Activated CD4-positive, alpha-beta T cell treated with anti-CD3 and anti-CD28 coated beads, Interleukin-2, amount 10 ng/mL, durations not matched to agents 24 days and 14 days (primary cell): ENCODE measurements at regions of chr2 and their contacts with region 1.

Region 1: DNA sequence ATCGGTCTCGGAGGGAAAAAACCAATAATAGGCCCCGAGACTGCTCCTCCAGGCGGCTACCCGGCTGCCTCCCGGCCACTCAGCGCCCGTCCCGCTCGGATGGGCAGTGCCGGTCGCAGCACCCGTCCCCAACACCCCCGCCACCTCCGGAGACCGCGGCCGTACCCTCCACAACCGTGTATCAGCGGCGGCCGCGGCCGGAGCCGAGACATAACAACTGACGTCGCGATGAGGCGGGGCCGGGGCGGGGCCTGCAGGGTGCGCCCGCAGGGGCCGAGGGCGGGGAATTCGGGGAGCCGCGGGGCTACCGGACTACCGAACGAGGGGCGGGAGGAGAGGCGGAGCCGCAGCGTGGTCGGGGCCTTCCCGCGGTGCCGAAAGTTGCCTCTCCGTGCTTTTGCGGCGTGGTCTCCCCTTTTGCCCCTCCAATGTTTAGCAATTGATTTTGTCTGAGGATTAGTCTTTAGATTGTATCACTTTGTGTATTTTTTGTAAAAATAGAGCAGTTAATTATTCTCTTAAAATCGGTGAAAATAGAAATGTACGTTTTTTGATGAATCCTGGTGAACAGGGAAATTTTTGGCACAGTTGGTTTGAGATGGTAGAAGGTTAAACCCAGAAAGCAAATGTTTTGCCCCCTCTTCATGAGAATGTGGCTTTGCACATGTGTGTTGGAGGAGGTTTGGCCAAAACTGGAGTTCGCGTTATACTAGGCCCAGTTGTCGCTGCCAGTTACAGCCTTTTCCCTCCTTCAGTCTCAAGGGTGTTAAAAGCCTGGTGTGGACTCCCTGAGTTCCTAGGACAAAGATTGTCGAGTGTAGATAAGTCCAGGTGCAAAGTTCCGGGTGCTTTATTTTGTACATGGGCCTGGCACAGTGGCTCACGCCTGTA is at the start of gene RNF103:
- DNase-seq: peak; percentile 98
- H3K4me3 Mint-ChIP-seq: peak within 1 kb of the TSS; percentile 93
- H3K27ac Mint-ChIP-seq: peak within 1 kb of the TSS; percentile 97
- H3K4me1 Mint-ChIP-seq: peaks cover 20% of the 10 kb centered on the region
- H3K27me3 Mint-ChIP-seq: peaks cover 19% of the 10 kb centered on the region
- total RNA-seq, gene RNF103: 11.7 and 12.1 TPM in 2 replicates

Region 2: GRCh38 chr2:86195055-86195807 is 428.7 kb before region 1 on chr2 and contains the start of gene IMMT:
- intact Hi-C with region 1: loop called (anchors 2 kb)
- DNase-seq: peak; percentile 98
- H3K4me3 Mint-ChIP-seq: peak within 1 kb of the TSS; percentile 99
- H3K27ac Mint-ChIP-seq: peak within 1 kb of the TSS; percentile 97
- H3K4me1 Mint-ChIP-seq: peaks cover 36% of the 10 kb centered on the region
- H3K27me3 Mint-ChIP-seq: no peaks in the 10 kb centered on the region
- total RNA-seq, gene IMMT: 181 and 188 TPM in 2 replicates

Region 3: DNA sequence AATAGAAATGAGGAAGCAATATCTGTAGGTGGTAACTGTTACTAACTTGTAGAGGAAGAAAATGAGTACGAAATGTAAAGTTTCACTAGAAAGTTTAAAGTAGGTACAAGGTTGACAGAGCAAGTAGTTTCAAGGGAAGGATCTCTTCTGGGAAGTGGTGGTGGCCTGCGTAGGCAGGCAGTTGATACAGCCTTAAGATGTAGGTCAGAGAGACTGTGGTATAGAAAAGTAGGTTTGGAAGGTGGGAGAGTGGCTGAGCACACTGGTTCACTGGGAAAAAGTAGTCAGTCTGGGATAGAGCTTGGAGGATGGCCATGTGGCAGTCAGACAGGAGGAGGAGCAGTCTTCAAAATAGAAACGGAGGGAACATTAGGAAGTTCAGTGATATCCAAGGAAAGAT is 159.2 kb before region 1 on chr2:
- intact Hi-C with region 1: loop called (anchors 5 kb)
- DNase-seq: no peak
- H3K4me3 Mint-ChIP-seq: peak overlapping the region; percentile 49
- H3K27ac Mint-ChIP-seq: peak overlapping the region; percentile 74
- H3K4me1 Mint-ChIP-seq: peaks cover 52% of the 10 kb centered on the region
- H3K27me3 Mint-ChIP-seq: no peaks in the 10 kb centered on the region

Region 4: DNA sequence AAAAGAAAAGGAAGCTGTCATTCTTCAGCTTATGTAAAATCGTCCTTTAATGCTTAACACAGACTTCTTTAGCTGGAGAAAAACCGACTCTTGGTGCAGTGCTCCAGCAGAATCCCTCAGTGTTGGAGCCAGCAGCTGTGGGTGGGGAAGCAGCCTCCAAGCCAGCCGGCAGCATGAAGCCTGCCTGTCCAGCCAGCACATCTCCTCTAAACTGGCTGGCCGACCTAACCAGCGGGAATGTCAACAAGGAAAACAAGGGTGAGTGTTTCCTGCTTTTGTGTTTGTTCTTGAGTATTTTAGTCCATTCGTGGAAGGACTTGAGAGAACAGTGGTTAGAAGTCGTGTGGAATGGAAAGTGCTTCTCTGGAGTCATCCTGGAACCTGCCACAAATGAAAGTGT is 143.8 kb before region 1 on chr2:
- intact Hi-C with region 1: loop called (anchors 1 kb)
- DNase-seq: no peak
- H3K4me3 Mint-ChIP-seq: no peak overlapping the region
- H3K27ac Mint-ChIP-seq: no peak overlapping the region
- H3K4me1 Mint-ChIP-seq: peaks cover 37% of the 10 kb centered on the region
- H3K27me3 Mint-ChIP-seq: no peaks in the 10 kb centered on the region

Region 5: DNA sequence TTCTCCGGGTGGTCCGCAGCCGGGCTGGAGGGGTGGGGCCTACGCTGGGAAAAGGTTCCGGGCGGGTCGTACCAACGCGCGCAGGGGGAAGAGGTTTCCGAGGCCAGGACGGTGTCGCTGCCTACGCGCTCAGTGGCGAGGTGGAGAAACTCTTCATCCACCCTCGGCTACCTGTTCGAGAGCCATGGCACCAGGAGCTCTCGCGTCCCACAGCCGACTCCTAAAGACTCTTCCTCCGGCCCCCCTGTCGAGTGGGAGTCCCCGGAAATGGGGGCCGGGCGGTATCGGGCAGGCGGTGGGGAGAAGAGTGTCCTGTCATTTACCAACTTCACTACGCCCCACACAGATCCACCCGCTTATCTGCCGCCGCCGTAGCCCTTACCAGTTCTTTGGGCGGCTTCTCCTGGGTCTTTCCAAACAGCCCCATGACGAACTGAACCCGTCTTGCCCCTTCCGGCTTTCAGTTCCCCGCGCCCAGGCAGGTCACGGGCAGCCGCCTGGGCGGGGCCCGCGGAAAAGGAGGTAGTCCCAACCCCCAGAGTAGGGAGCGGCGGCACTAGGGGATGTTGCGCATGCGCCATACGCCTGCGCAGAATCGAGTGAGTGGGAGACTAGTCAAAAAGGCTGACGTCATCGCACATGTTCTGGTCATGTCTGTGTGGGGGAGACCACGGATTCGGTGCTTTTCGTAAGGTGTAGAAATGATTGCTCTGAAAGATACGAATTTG is 60.8 kb before region 1 on chr2 and contains the start of gene CHMP3:
- intact Hi-C with region 1: loop called (anchors 1 kb)
- DNase-seq: peak; percentile 99
- H3K4me3 Mint-ChIP-seq: peak within 1 kb of the TSS; percentile 95
- H3K27ac Mint-ChIP-seq: peak within 1 kb of the TSS; percentile 99
- H3K4me1 Mint-ChIP-seq: peaks cover 24% of the 10 kb centered on the region
- H3K27me3 Mint-ChIP-seq: peaks cover 2% of the 10 kb centered on the region
- total RNA-seq, gene CHMP3: 28.3 and 29.0 TPM in 2 replicates

Region 6: GRCh38 chr2:86584151-86584913 is 39.6 kb before region 1 on chr2:
- intact Hi-C with region 1: loop called (anchors 5 kb)
- DNase-seq: peak; percentile 71
- H3K4me3 Mint-ChIP-seq: peak overlapping the region; percentile 57
- H3K27ac Mint-ChIP-seq: peak overlapping the region; percentile 88
- H3K4me1 Mint-ChIP-seq: peaks cover 9% of the 10 kb centered on the region
- H3K27me3 Mint-ChIP-seq: peaks cover 3% of the 10 kb centered on the region